ENCODE measurements at regions of chr2 and their contacts with region 1.

Region 1: DNA sequence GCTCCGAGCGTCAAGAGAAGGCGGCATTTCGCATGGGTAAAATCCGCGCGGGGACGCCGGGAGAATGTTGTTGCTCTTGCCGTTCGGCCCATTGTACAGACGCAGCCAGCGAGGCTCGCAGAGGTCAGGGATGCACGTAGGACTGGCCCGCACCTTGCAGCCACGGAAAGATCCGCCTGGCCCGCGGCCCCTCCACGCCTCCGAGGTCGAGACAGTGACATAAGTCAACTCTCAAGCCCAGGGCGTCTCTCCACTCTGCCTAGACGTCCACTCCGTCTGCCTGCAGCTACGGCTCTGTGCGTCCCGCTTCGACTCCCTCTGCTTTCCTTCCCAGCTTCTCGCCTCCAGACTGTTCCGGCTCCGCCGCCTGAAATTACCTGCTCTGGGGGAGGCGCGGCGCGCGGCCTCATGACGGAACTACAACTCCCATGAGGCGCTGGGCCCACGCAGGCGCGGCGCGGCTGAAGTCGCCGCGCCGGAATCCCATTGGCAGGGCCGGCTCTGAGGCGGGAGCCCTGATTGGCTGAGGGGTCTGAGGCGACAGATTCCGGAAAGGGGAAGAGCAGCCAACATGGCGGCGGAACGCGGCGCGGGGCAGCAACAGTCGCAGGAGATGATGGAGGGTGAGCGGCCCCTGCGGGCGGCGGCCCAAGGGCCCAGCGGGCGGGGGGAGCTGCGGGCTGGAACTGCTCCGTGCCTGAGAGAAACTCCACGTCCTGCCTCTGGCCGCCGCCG is at the start of gene PPP1R7:
- DNase-seq: peak; percentile 94 to 95
- ATAC-seq: peak; percentile 96 to 99 (median 98)
- H3K4me3 ChIP-seq: peak within 1 kb of the TSS; percentile 63 to 100 (median 95)
- H3K27ac ChIP-seq: peak within 1 kb of the TSS in 9 of 10 donors; percentile 70 to 94 (median 89)
- H3K4me1 ChIP-seq: peaks cover 2 to 24% (median 20%) of the 10 kb centered on the region in 9 donors
- H3K27me3 ChIP-seq: no peaks in the 10 kb centered on the region
- CTCF ChIP-seq: peak in 4 of 9 donors; percentile 24 to 39 (median 34)
- total RNA-seq, gene PPP1R7: 64.1 to 91.3 (median 78.3) TPM

Region 2: DNA sequence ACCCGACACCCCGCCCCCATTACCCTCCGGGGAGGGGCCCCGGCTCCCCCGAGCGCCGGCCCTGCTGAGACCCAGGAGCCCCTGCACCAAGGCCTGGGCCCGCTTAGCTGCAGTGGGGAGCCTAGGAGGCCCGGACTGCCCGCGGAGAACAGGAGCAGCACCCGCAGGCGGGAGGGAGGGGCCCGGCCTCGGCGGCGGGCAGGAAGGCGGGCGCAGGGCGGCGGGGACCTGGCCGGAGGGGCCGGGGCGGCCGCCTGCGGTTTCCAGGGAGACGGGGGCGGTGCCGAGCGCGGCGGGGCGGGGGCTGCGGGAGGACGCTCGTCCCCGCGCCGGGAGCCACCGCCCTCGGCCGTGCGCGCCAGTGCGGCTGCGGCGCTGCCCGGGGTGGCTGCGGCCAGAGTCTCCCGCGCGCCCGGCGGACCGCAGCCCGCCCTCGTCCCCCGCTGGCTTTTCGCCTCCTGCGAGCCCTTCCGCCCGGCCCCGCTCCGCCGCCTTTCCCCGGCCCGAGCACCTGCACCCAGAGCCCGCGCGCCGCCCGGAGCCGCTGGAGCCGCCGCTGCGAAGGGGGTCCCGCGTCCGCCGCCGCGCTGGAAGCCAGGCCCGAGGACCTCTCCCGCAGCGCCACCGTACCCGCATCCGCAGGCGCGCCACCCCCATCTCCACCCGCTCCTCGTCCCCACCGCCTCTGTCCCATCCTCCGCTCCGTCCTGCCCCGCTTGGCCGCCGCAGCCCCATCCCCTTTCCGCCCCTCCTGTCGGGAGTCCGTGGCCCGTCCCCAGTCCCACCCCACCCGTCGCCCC is 697.4 kb before region 1 on chr2:
- intact Hi-C with region 1: no loop called
- DNase-seq: peak in 1 of 2 donors; percentile 81
- ATAC-seq: peak; percentile 31 to 81 (median 56)
- H3K4me3 ChIP-seq: peak overlapping the region; percentile 14 to 61 (median 51)
- H3K27ac ChIP-seq: peak overlapping the region in 1 of 10 donors; percentile 25
- H3K4me1 ChIP-seq: peaks cover 14 to 79% (median 50%) of the 10 kb centered on the region in 9 donors
- H3K27me3 ChIP-seq: peaks cover 0 to 61% (median 35%) of the 10 kb centered on the region in 7 donors
- CTCF ChIP-seq: no peak

Region 3: DNA sequence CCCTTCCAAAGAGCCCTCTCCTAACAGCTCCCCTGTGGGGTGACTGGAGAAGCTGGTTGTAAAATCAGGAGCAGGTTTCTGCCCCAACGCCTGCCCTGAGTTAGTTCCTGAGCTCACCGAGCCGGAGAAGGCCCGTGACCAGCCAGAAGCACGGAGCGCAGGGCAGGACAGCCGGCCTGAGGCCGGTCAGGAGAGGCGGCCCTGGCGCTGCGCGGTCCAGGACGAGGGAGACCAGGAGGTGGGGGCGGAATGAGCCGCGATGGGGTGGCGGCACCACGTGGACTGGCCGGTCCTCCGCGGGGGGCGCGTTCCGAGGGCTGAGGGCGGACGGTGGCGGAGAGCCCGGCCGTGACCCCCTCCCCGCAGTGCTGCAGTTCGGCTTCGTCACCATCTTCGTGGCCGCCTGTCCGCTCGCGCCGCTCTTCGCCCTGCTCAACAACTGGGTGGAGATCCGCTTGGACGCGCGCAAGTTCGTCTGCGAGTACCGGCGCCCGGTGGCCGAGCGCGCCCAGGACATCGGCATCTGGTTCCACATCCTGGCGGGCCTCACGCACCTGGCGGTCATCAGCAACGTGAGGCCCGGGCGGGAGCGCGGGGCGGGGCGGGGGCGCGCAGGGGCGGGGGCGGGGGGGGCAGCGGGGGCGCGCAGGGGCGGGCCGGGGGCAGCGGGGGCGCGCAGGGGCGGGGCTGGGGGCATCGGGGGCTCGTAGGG is 67.4 kb after region 1 on chr2:
- intact Hi-C with region 1: loop called in 2 of 10 experiments (anchors 2 to 5 kb)
- DNase-seq: peak; percentile 59 to 69
- ATAC-seq: peak; percentile 80 to 91 (median 85)
- H3K4me3 ChIP-seq: peak overlapping the region in 9 of 10 donors; percentile 40 to 68 (median 60)
- H3K27ac ChIP-seq: peak overlapping the region; percentile 14 to 92 (median 82)
- H3K4me1 ChIP-seq: peaks cover 7 to 17% (median 9%) of the 10 kb centered on the region in 9 donors
- H3K27me3 ChIP-seq: peaks cover 0 to 8% (median 0%) of the 10 kb centered on the region in 7 donors
- CTCF ChIP-seq: peak in 2 of 9 donors; percentile 9 to 14

Region 4: DNA sequence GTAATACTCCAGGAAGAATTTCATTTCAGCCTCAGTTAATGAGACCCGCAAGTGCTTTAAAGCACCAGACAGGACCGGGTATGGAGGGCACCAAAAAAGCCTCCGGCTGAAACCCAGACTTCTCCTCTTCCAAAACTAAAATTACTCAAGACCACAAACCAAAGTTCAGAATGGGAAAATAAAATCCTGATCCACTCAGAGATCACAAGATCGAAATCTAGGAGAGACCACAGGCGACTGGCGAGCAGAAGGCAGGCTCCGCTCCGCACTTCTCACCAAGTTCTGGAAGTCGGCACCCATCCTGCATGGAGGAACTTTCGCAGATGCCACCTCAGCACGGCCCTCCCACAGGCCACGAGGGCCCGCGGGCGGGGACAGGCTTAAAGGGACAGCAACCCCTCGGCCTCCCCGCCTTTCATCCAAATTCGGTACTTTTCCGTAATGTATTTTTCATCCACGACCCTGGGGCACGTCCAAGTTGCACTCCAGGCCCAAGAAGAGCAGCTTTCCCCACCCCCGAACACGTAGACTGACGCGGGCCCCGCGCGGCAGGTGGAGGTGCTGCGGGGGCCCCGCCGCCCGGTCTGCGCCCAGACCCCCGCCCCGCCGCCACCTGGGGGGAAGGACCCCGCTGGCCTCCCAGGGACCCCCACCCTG is 121.7 kb after region 1 on chr2:
- intact Hi-C with region 1: no loop called
- DNase-seq: peak; percentile 79 to 85
- ATAC-seq: peak; percentile 83 to 93 (median 90)
- H3K4me3 ChIP-seq: peak overlapping the region; percentile 81 to 96 (median 91)
- H3K27ac ChIP-seq: peak overlapping the region; percentile 63 to 96 (median 93)
- H3K4me1 ChIP-seq: peaks cover 6 to 48% (median 39%) of the 10 kb centered on the region in 9 donors
- H3K27me3 ChIP-seq: no peaks in the 10 kb centered on the region
- CTCF ChIP-seq: no peak

Region 5: GRCh38 chr2:241339839-241340630 is 189.9 kb after region 1 on chr2:
- intact Hi-C with region 1: loop called in 1 of 10 experiments (anchors 10 kb)
- DNase-seq: no peak
- ATAC-seq: peak in 1 of 8 donors; percentile 19
- H3K4me3 ChIP-seq: no peak overlapping the region
- H3K27ac ChIP-seq: peak overlapping the region in 1 of 10 donors; percentile 46
- H3K4me1 ChIP-seq: peaks cover 0 to 19% (median 8%) of the 10 kb centered on the region in 9 donors
- H3K27me3 ChIP-seq: no peaks in the 10 kb centered on the region
- CTCF ChIP-seq: no peak

Measured in heart right ventricle (tissue), 16 donors.